ENCODE measurements at regions of chr1 and their contacts with region 1.

Region 1: DNA sequence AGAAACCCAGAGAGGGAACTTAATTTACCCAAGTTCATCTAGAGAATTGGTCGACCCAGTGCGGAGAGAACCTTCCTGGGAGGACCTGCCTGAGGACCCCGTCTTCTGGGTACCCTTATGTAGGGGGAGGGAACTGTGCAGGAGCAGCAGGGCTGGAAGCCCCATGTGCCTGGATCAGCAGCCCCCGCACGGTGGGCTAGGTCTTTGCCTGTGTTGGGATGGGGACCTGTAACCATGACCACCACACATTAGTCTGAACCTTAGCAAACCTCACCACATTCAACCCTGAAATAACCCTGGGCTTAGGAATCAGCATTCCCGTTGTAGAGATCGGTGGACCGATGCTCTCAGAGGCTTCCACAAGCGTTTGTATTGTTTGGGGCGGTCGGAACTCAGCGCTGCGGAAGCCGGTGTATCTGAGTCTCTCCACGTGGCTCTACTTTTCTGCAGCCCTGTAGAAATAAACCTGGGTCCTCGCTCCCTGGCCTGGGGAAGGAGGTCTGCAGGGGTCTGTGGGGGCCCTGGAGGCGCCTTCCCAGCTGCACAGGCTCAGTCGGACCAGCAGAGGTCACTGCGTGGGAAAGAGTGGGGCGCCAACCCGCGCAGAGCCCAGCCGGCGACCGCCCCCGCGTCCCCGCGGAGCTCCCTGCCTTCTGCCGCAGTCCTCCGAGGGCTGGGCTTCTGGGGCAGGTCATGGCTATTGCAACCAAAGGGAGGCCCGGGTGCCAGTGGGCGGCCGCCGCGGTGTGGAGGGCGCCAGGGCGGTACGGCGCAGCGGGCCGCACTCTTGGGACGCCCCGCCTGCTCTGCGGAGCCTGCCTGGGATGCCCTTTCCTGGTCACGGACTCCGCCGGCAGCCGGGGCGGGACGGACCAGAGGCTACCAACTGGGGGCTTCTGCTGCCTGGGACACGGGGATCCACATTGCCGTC is 36.2 kb upstream of the KCNA10 start:
- DNase-seq: peak; percentile 89
- H3K4me3 ChIP-seq: peak overlapping the region; percentile 42 to 44; a peak in 3 of 4 replicates
- H3K27ac ChIP-seq: no peak overlapping the region
- H3K4me1 ChIP-seq: peaks cover 0 to 9% of the 10 kb centered on the region in 2 experiments; a peak in 1 of 4 replicates
- H3K27me3 ChIP-seq: peaks cover 15% of the 10 kb centered on the region; the same call in 1 of the 2 replicates
- CTCF ChIP-seq: peak; percentile 59
- EP300 ChIP-seq: no peak
- RAD21 ChIP-seq: peak; percentile 42

Region 2: GRCh38 chr1:110076789-110077500 is 478.2 kb before region 1 on chr1:
- CTCF ChIA-PET with region 1: no interaction called
- POLR2A ChIA-PET with region 1: no interaction called
- DNase-seq: no peak
- H3K4me3 ChIP-seq: no peak overlapping the region
- H3K27ac ChIP-seq: no peak overlapping the region
- H3K4me1 ChIP-seq: peaks cover 0 to 10% of the 10 kb centered on the region in 2 experiments; a peak in 1 of 4 replicates
- H3K27me3 ChIP-seq: no peaks in the 10 kb centered on the region; the same call in 1 of the 2 replicates
- CTCF ChIP-seq: no peak
- EP300 ChIP-seq: no peak
- RAD21 ChIP-seq: no peak

Region 3: DNA sequence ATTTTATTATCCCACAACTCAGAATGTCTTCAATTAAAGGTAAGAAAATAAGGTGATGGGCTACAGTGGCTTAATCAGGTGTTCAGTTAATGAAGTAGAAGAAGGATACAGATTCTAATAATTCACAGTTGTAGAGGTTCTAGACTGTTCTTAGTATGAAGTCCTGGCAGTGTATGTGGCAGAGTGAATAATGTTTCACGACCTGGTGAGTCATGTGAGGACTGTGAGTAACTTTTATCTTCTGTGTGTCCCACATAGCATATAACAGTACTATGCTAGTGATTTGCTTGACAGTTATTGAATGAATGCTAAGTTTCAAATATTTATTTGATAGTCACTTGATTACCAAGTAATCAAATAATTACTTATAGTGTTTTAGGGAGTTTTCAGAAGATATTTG is 184.3 kb before region 1 on chr1:
- CTCF ChIA-PET with region 1: no interaction called
- POLR2A ChIA-PET with region 1: no interaction called
- DNase-seq: no peak
- H3K4me3 ChIP-seq: no peak overlapping the region
- H3K27ac ChIP-seq: peak overlapping the region in 1 of 2 experiments; percentile 20; a peak in 1 of 4 replicates
- H3K4me1 ChIP-seq: no peaks in the 10 kb centered on the region
- H3K27me3 ChIP-seq: no peaks in the 10 kb centered on the region
- CTCF ChIP-seq: no peak
- EP300 ChIP-seq: no peak
- RAD21 ChIP-seq: no peak

Region 4: DNA sequence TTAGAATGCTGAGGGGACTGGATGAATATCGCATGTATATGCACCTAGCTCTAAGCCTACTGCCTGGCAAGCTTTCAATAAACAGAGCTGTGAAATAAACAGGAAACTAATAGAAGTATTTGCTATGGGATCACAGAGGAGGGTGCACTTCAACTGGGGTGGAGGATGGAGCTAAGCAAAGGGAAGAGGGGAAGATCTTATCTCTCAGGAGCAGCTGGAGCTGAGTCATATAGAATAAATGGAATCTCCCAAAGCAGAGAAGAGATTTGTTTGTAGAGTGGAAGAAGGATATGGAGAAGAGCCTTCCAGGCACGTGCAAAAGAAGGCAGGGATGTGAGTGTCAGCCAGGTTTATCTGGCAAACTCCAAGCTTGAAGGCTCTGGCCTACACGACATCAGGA is 19.2 kb before region 1 on chr1:
- CTCF ChIA-PET with region 1: interaction called, 48 read pairs
- POLR2A ChIA-PET with region 1: no interaction called
- DNase-seq: no peak
- H3K4me3 ChIP-seq: no peak overlapping the region
- H3K27ac ChIP-seq: no peak overlapping the region
- H3K4me1 ChIP-seq: no peaks in the 10 kb centered on the region; a peak in 1 of 4 replicates
- H3K27me3 ChIP-seq: no peaks in the 10 kb centered on the region
- CTCF ChIP-seq: no peak
- EP300 ChIP-seq: no peak
- RAD21 ChIP-seq: no peak

Region 5: GRCh38 chr1:110565565-110565964 is 10.4 kb after region 1 on chr1:
- CTCF ChIA-PET with region 1: interaction called, 19 read pairs
- POLR2A ChIA-PET with region 1: no interaction called
- DNase-seq: no peak
- H3K4me3 ChIP-seq: no peak overlapping the region
- H3K27ac ChIP-seq: no peak overlapping the region
- H3K4me1 ChIP-seq: no peaks in the 10 kb centered on the region; a peak in 1 of 4 replicates
- H3K27me3 ChIP-seq: no peaks in the 10 kb centered on the region
- CTCF ChIP-seq: no peak
- EP300 ChIP-seq: no peak
- RAD21 ChIP-seq: no peak

Region 6: GRCh38 chr1:110581682-110582145 is 26.6 kb after region 1 on chr1:
- CTCF ChIA-PET with region 1: interaction called, 20 read pairs
- POLR2A ChIA-PET with region 1: no interaction called
- DNase-seq: no peak
- H3K4me3 ChIP-seq: no peak overlapping the region
- H3K27ac ChIP-seq: no peak overlapping the region
- H3K4me1 ChIP-seq: no peaks in the 10 kb centered on the region
- H3K27me3 ChIP-seq: no peaks in the 10 kb centered on the region
- CTCF ChIP-seq: no peak
- EP300 ChIP-seq: no peak
- RAD21 ChIP-seq: no peak

Region 7: DNA sequence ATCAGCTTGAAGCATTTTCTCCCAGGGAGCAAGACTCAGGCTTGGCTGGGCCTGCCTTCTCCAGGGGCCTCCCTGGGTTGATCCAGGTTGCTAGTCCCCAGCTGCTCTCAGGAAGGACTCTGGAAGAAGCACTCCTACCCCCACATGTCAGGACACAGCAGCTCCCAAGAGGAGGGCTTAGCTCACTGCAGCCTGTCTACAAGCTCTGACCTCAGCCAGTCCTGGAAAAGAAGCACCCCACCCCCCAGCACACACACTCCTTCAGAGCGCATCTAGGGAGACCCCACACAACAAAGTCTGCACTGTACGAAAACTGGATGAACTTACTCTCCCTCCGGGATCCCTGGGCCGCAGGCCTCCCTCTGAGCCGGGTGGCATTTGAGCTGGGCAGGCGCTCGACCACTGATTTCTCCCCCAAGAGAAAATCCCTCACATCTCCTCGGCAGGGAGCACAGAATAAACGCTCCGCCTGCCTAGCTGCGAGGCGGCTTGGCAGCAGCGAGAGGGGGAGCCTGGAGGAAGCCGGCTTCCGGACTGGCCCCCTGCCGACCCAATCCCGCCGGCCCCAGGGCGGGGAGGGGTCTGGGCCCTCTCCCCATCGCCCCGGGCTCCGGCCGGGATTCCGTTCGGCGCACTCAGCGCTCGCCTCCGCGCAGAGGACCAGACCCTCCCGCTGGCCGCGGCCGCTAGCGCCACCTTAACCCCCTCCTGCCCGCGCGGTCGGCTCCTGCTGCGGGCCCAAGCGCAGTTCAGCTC is 50.9 kb after region 1 on chr1 and contains the start of gene KCNA2:
- CTCF ChIA-PET with region 1: interaction called, 74 read pairs
- POLR2A ChIA-PET with region 1: interaction called, 3 read pairs
- DNase-seq: peak; percentile 88
- H3K4me3 ChIP-seq: peak within 1 kb of the TSS; percentile 43 to 56
- H3K27ac ChIP-seq: no peak within 1 kb of the TSS
- H3K4me1 ChIP-seq: peaks cover 0 to 10% of the 10 kb centered on the region in 2 experiments; a peak in 2 of 4 replicates
- H3K27me3 ChIP-seq: peaks cover 60% of the 10 kb centered on the region
- CTCF ChIP-seq: no peak
- EP300 ChIP-seq: no peak
- RAD21 ChIP-seq: no peak
- polyA plus RNA-seq, gene KCNA2: not detected in 2 replicates

Region 8: DNA sequence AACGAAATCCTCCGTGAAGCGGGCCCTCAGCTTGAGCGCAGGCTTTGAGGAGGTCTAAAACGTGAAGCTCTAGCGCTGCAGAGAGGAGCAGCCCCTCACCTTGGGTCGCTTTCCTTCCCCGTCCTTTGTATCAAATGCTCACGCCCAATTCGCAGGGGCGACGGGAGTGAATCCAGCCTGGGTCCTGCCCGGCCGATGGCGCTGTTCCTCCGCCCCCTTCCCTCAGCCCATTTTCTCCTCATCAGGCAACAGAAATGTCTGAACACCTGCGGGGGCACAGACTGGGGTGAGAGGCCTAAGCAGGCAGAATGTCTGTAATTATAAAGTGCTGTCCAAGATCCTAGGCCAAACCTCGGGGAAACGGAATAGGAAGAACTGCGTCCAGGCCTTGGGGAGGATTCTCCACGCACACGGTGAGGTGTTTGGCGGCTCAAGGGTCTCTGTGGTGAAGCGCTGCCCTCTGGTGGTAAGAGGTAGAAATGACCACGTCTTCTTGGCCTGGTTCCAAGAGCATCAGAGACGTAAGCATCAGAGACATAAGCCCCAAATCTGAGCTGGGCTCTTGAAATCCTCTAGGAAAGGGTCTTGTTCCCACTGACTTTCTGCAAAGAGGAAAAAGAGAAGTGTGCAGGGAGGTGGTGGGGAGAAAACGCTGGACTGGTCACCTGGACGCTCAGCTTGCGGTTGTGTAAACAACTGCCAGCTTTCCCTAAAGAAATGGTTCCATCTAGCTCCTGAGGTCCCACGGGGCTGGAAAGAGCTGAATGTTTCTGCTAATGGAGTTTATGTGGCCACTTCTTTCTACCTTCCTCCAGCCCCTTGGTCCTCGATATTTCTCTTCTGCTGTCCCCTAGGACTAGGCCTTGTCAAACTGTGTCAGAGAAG is 225.7 kb after region 1 on chr1:
- CTCF ChIA-PET with region 1: interaction called, 23 read pairs
- POLR2A ChIA-PET with region 1: no interaction called
- DNase-seq: peak; percentile 69
- H3K4me3 ChIP-seq: no peak overlapping the region; a peak in 1 of 4 replicates
- H3K27ac ChIP-seq: no peak overlapping the region
- H3K4me1 ChIP-seq: no peaks in the 10 kb centered on the region; a peak in 1 of 4 replicates
- H3K27me3 ChIP-seq: no peaks in the 10 kb centered on the region; the same call in 1 of the 2 replicates
- CTCF ChIP-seq: peak; percentile 75
- EP300 ChIP-seq: no peak
- RAD21 ChIP-seq: peak; percentile 79

Measured in SK-N-SH (cell line).